Activated CD4-positive, alpha-beta T cell treated with anti-CD3 and anti-CD28 coated beads, Interleukin-2, amount 10 ng/mL, durations not matched to agents 7 days and 5 days (primary cell): ENCODE measurements at regions of chr1 and their contacts with region 1.

Region 1: GRCh38 chr1:85376356-85376755 is 88.6 kb downstream of the DDAH1 start:
- DNase-seq: no peak
- H3K4me3 Mint-ChIP-seq: no peak overlapping the region
- H3K27ac Mint-ChIP-seq: no peak overlapping the region
- H3K4me1 Mint-ChIP-seq: no peaks in the 10 kb centered on the region
- H3K27me3 Mint-ChIP-seq: peaks cover 15% of the 10 kb centered on the region

Region 2: GRCh38 chr1:85330711-85331290 is 45.6 kb before region 1 on chr1:
- CTCF ChIA-PET with region 1: no interaction called
- POLR2A ChIA-PET with region 1: no interaction called
- DNase-seq: no peak
- H3K4me3 Mint-ChIP-seq: no peak overlapping the region
- H3K27ac Mint-ChIP-seq: no peak overlapping the region
- H3K4me1 Mint-ChIP-seq: peaks cover 13% of the 10 kb centered on the region
- H3K27me3 Mint-ChIP-seq: peaks cover 43% of the 10 kb centered on the region

Region 3: GRCh38 chr1:85360730-85361493 is 15.4 kb before region 1 on chr1:
- CTCF ChIA-PET with region 1: no interaction called
- POLR2A ChIA-PET with region 1: no interaction called
- DNase-seq: no peak
- H3K4me3 Mint-ChIP-seq: no peak overlapping the region
- H3K27ac Mint-ChIP-seq: no peak overlapping the region
- H3K4me1 Mint-ChIP-seq: no peaks in the 10 kb centered on the region
- H3K27me3 Mint-ChIP-seq: peaks cover 13% of the 10 kb centered on the region

Region 4: DNA sequence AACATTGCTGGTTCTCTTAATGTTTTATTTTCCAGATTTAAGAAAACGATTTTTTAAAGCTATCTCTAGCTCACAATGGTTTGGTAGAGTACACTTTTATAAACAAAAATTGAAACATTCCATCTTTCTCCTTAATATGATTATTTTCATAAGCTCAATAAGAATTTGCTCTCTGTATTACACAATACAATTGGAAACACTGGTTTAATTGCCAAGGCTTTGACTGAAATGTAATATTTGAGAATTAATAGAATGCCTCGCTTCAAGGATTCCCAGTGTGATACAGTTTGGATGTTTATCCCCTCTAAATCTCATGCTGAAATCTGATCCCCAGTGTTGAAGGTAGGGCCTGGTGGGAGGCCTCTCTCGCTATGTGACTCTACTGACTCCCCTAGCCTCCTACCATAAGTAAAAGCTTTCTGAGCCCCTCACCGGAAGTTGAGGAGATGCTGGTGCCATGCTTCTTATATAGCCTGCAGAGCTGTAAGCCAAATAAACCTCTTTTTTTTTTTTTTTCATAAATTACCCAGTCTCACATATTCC is 21.2 kb after region 1 on chr1:
- CTCF ChIA-PET with region 1: interaction called, 3 read pairs
- POLR2A ChIA-PET with region 1: interaction called, 10 read pairs
- DNase-seq: no peak
- H3K4me3 Mint-ChIP-seq: no peak overlapping the region
- H3K27ac Mint-ChIP-seq: no peak overlapping the region
- H3K4me1 Mint-ChIP-seq: no peaks in the 10 kb centered on the region
- H3K27me3 Mint-ChIP-seq: peaks cover 4% of the 10 kb centered on the region